ENCODE measurements at regions of chr2 and their contacts with region 1.

Region 1: DNA sequence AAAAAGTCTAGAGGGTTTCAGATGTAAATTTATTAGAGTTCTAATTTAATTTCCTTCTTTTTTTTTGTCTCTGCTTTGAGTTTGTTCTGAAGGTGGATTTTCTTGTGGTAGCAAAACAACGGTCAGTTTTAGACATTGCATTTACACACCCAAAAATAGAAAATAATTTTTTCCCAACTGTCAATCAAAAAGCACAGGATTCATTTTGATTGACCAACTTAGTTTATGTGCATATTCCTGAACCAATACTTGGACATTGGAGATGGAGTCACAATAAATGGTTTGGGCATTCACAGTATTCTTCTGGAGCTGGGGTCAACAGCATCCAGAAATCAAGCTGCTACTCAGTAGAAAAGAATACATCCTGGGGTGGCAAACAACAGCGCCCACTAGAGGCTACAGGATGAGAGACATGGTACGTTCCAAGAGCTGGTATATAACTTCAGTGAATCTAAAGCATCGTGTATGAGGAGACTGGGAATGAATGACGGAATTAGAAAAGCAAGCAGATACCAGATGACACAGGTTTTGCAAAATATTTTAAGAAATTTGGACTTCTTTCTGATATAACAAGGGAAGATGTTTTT is 142.8 kb upstream of the FIGN start:
- DNase-seq: peak in 1 of 2 donors; percentile 7
- ATAC-seq: peak in 1 of 4 donors; percentile 35
- H3K4me3 ChIP-seq: no peak overlapping the region
- H3K27ac ChIP-seq: no peak overlapping the region
- H3K4me1 ChIP-seq: no peaks in the 10 kb centered on the region
- H3K27me3 ChIP-seq: no peaks in the 10 kb centered on the region
- CTCF ChIP-seq: peak; percentile 29

Region 2: DNA sequence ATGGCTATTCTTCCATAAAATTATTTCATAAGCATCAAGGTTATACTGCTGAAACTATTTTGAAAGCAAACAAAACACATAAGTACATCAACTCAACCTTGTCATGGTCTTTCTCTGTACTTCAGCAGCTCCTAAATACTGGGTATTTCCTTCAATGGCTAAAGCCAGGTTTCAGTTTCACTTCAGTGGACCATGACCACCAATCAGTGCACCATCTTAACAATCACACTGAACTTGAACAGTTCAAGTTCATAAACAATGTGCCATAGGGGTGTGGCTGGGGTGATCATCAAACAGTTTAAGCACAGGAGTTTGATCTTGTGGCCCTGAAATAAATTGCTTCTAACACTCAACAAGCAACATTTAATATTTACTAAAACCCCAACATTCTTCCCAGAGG is 18.7 kb before region 1 on chr2:
- intact Hi-C with region 1: loop called in 1 of 2 experiments (anchors 2 kb)
- DNase-seq: no peak
- ATAC-seq: no peak
- H3K4me3 ChIP-seq: no peak overlapping the region
- H3K27ac ChIP-seq: no peak overlapping the region
- H3K4me1 ChIP-seq: no peaks in the 10 kb centered on the region
- H3K27me3 ChIP-seq: no peaks in the 10 kb centered on the region
- CTCF ChIP-seq: no peak